ENCODE measurements at regions of chr5 and their contacts with region 1.

Region 1: GRCh38 chr5:177592010-177592834 is at the start of gene TMED9:
- DNase-seq: peak; percentile 93
- H3K4me3 Mint-ChIP-seq: peak within 1 kb of the TSS; percentile 100
- H3K27ac Mint-ChIP-seq: peak within 1 kb of the TSS; percentile 94
- H3K4me1 Mint-ChIP-seq: peaks cover 35% of the 10 kb centered on the region
- H3K27me3 Mint-ChIP-seq: peaks cover 5% of the 10 kb centered on the region
- total RNA-seq, gene TMED9: 135 to 144 TPM

Region 2: DNA sequence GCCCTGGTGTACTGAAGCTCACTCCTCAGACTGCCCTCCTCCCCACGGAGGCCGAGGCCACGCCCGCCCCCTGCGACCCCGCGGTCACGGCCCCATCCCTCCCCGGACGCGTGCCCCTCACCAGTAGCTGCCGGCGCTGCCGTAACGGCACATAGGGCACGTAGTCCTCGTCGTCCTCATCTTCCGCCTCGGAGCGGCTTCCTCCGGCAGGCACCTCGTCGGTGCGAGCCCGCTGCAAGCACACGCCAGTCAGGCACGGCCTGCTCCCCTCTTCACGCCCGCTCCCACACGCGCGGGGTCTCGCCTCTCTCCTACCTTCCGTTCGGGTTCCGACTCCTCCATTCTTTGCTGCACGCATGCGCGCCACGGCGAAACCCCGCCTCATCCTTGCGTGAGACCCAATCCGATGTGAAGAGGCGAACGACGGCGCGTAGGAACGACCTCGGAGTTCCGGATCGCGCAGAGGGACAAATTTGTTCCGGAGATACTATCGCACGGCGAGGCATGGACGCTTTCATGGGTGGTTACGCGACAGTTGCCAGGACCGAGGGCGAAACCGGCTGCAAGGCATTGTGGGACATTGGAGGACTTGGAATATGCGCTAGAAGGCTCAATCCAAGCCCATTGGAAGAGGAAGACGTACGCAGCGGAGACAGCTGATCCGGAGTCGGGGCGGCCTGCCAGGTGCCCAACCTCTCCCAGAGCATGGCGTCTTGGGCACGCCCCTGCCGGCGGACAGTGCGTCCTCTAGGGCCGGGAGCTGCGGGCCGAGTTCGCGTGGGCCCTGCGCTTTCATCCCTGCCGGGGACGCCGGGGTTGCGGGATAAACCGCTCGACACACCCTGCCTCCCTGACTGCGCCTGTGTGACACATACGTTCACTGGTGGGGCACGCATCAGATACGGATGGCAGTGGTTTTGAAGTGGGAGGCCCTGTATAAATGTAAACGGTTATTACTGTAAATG is 75.3 kb before region 1 on chr5 and contains the start of gene DDX41:
- CTCF ChIA-PET with region 1: no interaction called
- POLR2A ChIA-PET with region 1: interaction called, 6 read pairs
- intact Hi-C with region 1: loop called (anchors 10 kb)
- DNase-seq: peak; percentile 98
- H3K4me3 Mint-ChIP-seq: peak within 1 kb of the TSS; percentile 88
- H3K27ac Mint-ChIP-seq: peak within 1 kb of the TSS; percentile 83
- H3K4me1 Mint-ChIP-seq: peaks cover 46% of the 10 kb centered on the region
- H3K27me3 Mint-ChIP-seq: no peaks in the 10 kb centered on the region
- total RNA-seq, gene DDX41: 143 to 145 TPM

Region 3: DNA sequence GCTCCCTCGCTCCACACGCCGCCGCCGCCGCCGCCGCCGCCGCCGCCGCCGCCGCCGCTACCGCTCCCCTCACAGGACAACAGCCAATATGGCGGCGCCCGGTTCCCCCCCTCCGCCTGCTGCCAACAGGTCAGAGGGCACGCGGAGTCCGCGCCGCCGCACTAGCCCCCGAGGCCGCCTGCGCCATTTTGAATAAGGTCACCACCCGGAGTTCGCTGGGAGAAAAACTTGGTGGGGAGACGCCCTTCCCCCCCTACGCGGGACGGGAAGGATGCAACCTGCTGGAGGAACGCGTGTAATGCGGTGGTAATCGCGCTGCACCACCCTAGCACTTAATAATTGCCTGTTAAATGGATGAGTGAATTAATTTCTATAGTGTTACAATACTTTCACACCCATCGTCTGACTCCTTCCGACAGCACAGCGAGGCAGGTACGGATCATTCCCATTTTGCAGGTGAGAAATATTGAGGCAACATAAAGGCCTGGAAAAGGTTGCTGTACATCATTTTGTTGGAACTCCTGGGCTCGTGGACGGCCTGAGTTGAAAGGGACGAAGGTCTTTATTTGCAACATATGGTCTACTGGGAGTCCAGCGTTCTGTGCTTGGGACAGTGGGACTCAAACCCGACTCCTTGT is 37.6 kb before region 1 on chr5 and contains the start of gene FAM193B:
- CTCF ChIA-PET with region 1: no interaction called
- POLR2A ChIA-PET with region 1: no interaction called
- intact Hi-C with region 1: loop called (anchors 1 kb)
- DNase-seq: peak; percentile 98
- H3K4me3 Mint-ChIP-seq: peak within 1 kb of the TSS; percentile 85
- H3K27ac Mint-ChIP-seq: peak within 1 kb of the TSS; percentile 51
- H3K4me1 Mint-ChIP-seq: peaks cover 35% of the 10 kb centered on the region
- H3K27me3 Mint-ChIP-seq: no peaks in the 10 kb centered on the region
- total RNA-seq, gene FAM193B: 70.7 to 75.4 TPM